ENCODE measurements at regions of chr2 and their contacts with region 1.

Region 1: GRCh38 chr2:24365051-24365450 is 4.7 kb upstream of the ITSN2 start:
- DNase-seq: peak; percentile 83 to 93
- ATAC-seq: peak; percentile 77 to 82
- H3K4me3 ChIP-seq: peak overlapping the region in 2 of 4 donors; percentile 2 to 12
- H3K27ac ChIP-seq: peak overlapping the region; percentile 69 to 83 (median 72)
- H3K4me1 ChIP-seq: peaks cover 18 to 20% of the 10 kb centered on the region in 2 donors
- H3K27me3 ChIP-seq: no peaks in the 10 kb centered on the region
- CTCF ChIP-seq: no peak
- POLR2A ChIP-seq: no peak

Region 2: GRCh38 chr2:24287171-24287570 is 77.9 kb before region 1 on chr2:
- in situ Hi-C with region 1: no loop called
- intact Hi-C with region 1: no loop called
- DNase-seq: no peak
- ATAC-seq: no peak
- H3K4me3 ChIP-seq: no peak overlapping the region
- H3K27ac ChIP-seq: no peak overlapping the region
- H3K4me1 ChIP-seq: no peaks in the 10 kb centered on the region
- H3K27me3 ChIP-seq: no peaks in the 10 kb centered on the region
- CTCF ChIP-seq: no peak
- POLR2A ChIP-seq: no peak

Region 3: DNA sequence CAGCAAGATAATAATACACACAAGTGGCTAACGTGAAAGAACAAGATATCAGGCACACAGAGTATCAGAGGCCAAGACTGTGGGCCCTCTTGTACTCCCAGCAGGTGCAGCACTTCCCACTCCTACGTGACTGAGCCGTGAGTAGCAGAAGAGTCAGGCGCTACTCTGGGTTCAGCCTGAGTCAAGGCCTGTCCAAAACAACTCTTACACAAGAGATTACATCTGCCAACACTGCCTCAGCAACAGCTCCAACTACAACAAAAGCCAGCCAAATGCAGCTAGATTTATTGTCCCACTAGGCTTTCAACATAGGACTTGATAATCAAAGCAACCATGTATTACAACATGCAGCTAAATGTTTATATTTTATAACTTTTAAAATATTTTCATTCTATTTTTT is 61.0 kb before region 1 on chr2:
- in situ Hi-C with region 1: no loop called
- intact Hi-C with region 1: loop called (anchors 2 kb)
- DNase-seq: peak; percentile 95 to 97
- ATAC-seq: peak; percentile 99 to 100
- H3K4me3 ChIP-seq: no peak overlapping the region
- H3K27ac ChIP-seq: peak overlapping the region; percentile 79 to 88 (median 84)
- H3K4me1 ChIP-seq: peaks cover 14 to 15% of the 10 kb centered on the region in 2 donors
- H3K27me3 ChIP-seq: no peaks in the 10 kb centered on the region
- CTCF ChIP-seq: peak in 1 of 5 experiments; percentile 12
- POLR2A ChIP-seq: no peak